Activated CD8-positive, alpha-beta T cell treated with anti-CD3 and anti-CD28 coated beads for 36 hours (primary cell): ENCODE measurements at regions of chr20 and their contacts with region 1.

Region 1: GRCh38 chr20:17536944-17537444 is 5.8 kb upstream of the BFSP1 start:
- DNase-seq: peak; percentile 81
- ATAC-seq: peak; percentile 97
- H3K4me3 Mint-ChIP-seq: no peak overlapping the region
- H3K27ac Mint-ChIP-seq: no peak overlapping the region
- H3K4me1 Mint-ChIP-seq: peaks cover 15% of the 10 kb centered on the region
- H3K27me3 Mint-ChIP-seq: peaks cover 16% of the 10 kb centered on the region
- CTCF ChIP-seq: peak; percentile 86

Region 2: GRCh38 chr20:17569616-17570346 is 32.8 kb after region 1 on chr20 and contains the start of gene DSTN:
- CTCF ChIA-PET with region 1: interaction called, 11 read pairs
- POLR2A ChIA-PET with region 1: no interaction called
- intact Hi-C with region 1: no loop called
- DNase-seq: peak; percentile 87
- ATAC-seq: peak; percentile 90
- H3K4me3 Mint-ChIP-seq: peak within 1 kb of the TSS; percentile 83
- H3K27ac Mint-ChIP-seq: peak within 1 kb of the TSS; percentile 81
- H3K4me1 Mint-ChIP-seq: peaks cover 16% of the 10 kb centered on the region
- H3K27me3 Mint-ChIP-seq: peaks cover 2% of the 10 kb centered on the region
- CTCF ChIP-seq: no peak
- total RNA-seq, gene DSTN: 55.5 to 56.4 TPM

Region 3: GRCh38 chr20:17611540-17612286 is 74.7 kb after region 1 on chr20:
- CTCF ChIA-PET with region 1: interaction called, 17 read pairs
- POLR2A ChIA-PET with region 1: no interaction called
- intact Hi-C with region 1: loop called (anchors 2 kb)
- DNase-seq: peak; percentile 58
- ATAC-seq: peak; percentile 3
- H3K4me3 Mint-ChIP-seq: peak overlapping the region; percentile 44
- H3K27ac Mint-ChIP-seq: peak overlapping the region; percentile 90
- H3K4me1 Mint-ChIP-seq: peaks cover 36% of the 10 kb centered on the region
- H3K27me3 Mint-ChIP-seq: no peaks in the 10 kb centered on the region
- CTCF ChIP-seq: peak; percentile 73

Region 4: DNA sequence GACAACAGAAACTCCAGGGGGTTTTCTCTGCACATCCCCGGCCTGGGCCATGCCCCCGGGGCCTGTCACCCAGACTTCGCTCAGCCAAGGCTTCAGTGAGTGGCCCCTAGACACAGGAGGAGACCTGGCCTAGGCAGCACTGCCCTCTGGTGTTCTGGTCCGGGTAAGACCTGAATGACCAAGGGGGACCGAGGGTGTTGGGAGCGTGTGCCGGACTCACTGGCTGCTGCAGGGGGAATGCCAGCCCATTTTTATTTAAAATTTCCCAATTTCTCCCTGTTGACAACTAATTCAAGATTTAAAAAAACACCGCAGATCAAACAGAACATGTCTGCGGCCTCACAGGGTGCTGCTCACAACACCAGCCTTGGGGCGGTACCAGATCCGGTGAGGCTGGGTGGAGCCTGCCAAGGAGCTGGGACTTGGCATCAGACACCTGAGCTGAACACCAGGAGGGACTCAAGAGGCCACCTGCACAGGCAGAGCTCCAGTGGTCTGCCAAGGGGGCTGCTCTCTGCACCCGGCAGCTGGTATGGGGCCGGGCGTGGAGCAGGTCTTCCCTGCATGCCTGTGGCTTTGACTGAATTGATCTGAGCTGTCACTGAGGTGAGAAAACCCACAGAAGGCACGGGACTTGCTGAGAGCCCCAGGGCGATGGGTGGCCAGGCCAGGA is 80.7 kb after region 1 on chr20:
- CTCF ChIA-PET with region 1: interaction called, 17 read pairs
- POLR2A ChIA-PET with region 1: no interaction called
- intact Hi-C with region 1: loop called (anchors 2 kb)
- DNase-seq: peak; percentile 62
- ATAC-seq: peak; percentile 66
- H3K4me3 Mint-ChIP-seq: no peak overlapping the region
- H3K27ac Mint-ChIP-seq: no peak overlapping the region
- H3K4me1 Mint-ChIP-seq: peaks cover 3% of the 10 kb centered on the region
- H3K27me3 Mint-ChIP-seq: no peaks in the 10 kb centered on the region
- CTCF ChIP-seq: peak; percentile 65

Region 5: DNA sequence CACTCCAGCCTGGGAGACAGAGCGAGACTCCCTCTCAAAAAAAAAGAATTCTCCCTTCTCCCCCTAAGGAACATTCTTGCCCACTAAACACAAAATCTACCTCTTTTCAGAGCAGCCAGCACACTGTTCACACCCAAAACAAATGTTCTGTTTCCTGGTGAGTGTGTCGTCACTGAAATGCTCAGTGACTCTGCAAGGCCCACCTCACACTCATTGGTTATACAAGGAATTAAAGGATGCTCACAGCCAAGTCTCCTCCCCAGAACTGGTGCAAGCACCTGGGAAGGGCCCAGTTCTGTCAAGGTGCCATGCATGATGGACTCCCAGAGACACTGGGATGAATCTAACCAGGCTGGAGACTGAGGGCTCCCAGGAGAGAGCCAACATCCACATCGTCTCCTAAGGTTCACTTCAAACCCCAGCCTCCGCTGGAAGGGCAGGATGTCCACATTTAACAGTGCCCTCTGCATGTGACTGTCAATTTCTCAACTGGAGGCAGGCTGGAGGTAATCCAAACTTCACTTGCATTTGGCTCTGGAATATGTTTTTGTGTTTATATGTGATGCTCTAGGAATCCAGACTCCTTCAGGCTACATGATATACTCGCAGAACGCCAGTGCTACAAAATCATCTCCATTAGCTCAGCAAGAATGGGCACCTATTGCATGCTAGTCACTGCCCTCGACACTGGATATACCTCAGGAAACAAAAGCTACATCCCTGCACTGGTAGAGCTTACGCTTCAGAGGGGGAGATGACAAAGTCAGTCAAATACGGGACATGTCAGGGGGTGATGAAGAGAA is 137.9 kb after region 1 on chr20:
- CTCF ChIA-PET with region 1: no interaction called
- POLR2A ChIA-PET with region 1: no interaction called
- intact Hi-C with region 1: no loop called
- DNase-seq: no peak
- ATAC-seq: no peak
- H3K4me3 Mint-ChIP-seq: no peak overlapping the region
- H3K27ac Mint-ChIP-seq: no peak overlapping the region
- H3K4me1 Mint-ChIP-seq: peaks cover 28% of the 10 kb centered on the region
- H3K27me3 Mint-ChIP-seq: no peaks in the 10 kb centered on the region
- CTCF ChIP-seq: no peak

Region 6: GRCh38 chr20:17898548-17898994 is 361.6 kb after region 1 on chr20:
- CTCF ChIA-PET with region 1: interaction called, 7 read pairs
- POLR2A ChIA-PET with region 1: no interaction called
- intact Hi-C with region 1: loop called (anchors 10 kb)
- DNase-seq: peak; percentile 81
- ATAC-seq: peak; percentile 67
- H3K4me3 Mint-ChIP-seq: no peak overlapping the region
- H3K27ac Mint-ChIP-seq: no peak overlapping the region
- H3K4me1 Mint-ChIP-seq: peaks cover 19% of the 10 kb centered on the region
- H3K27me3 Mint-ChIP-seq: peaks cover 21% of the 10 kb centered on the region
- CTCF ChIP-seq: peak; percentile 95